Gastrocnemius medialis (tissue), 4 donors: ENCODE measurements at regions of chr18 and their contacts with region 1.

Region 1: GRCh38 chr18:12657684-12658425 is at the start of gene SPIRE1:
- DNase-seq: peak; percentile 67 to 75
- ATAC-seq: peak; percentile 81 to 88
- H3K4me3 ChIP-seq: peak within 1 kb of the TSS; percentile 72 to 96 (median 80)
- H3K27ac ChIP-seq: peak within 1 kb of the TSS; percentile 88 to 99 (median 94)
- H3K4me1 ChIP-seq: peaks cover 1 to 18% of the 10 kb centered on the region in 2 donors
- H3K27me3 ChIP-seq: no peaks in the 10 kb centered on the region
- CTCF ChIP-seq: peak in 1 of 5 experiments; percentile 25
- POLR2A ChIP-seq: peak; percentile 79 to 84
- total RNA-seq, gene SPIRE1: 48.3 to 82.7 (median 55.1) TPM

Region 2: DNA sequence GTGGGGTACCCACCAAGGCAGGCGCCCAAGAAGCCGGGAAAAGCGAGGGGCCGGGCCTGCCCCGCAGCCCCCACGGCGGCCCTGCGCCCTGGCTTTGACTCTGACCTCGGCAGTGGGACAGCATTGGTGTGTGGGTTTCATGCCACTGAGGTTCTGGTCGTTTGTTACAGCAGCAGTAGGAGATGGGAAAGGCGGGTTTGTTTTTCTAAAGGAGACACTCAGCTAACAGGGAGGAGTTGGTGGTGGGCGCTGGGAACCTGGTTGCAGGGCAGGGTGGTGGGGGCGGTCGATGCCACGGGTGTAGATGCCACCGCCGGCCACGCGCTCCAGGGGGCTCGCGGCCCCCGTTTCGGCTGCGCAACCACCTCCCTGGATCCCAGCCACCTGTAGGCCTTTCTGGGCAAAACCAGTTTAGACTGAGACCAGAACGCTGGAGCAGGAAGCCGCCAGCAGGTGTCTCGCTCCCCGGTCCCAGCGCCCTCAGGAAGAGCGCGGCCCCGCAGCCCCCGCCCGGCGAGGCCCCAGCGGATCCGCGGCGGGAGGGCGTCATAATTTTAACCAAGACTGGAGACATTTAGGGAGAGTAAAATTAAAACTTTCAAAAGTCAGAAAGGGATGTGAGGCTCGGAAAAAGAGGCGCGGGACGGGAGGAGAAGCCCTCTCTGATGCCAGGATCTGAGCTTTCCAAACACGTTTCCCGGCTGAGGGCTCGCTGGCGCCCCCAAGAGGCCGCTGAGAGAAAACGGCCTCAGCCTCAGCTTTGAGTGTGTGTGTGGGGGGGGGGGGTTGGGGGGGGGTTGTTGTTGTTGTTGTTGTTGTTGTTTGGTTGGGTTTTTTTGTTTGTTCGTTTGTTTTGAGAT is 386.2 kb before region 1 on chr18:
- in situ Hi-C with region 1: no loop called
- intact Hi-C with region 1: loop called (anchors 5 kb)
- DNase-seq: peak in 1 of 2 donors; percentile 39
- ATAC-seq: peak; percentile 89 to 96
- H3K4me3 ChIP-seq: peak overlapping the region; percentile 48 to 86 (median 54)
- H3K27ac ChIP-seq: peak overlapping the region; percentile 34 to 75 (median 64)
- H3K4me1 ChIP-seq: no peaks in the 10 kb centered on the region
- H3K27me3 ChIP-seq: no peaks in the 10 kb centered on the region
- CTCF ChIP-seq: peak; percentile 29 to 70 (median 60)
- POLR2A ChIP-seq: no peak

Region 3: GRCh38 chr18:12391618-12392165 is 266.2 kb before region 1 on chr18:
- in situ Hi-C with region 1: loop called (anchors 5 to 10 kb)
- intact Hi-C with region 1: loop called (anchors 1 kb)
- DNase-seq: peak; percentile 33 to 34
- ATAC-seq: peak; percentile 90 to 91
- H3K4me3 ChIP-seq: no peak overlapping the region
- H3K27ac ChIP-seq: no peak overlapping the region
- H3K4me1 ChIP-seq: no peaks in the 10 kb centered on the region
- H3K27me3 ChIP-seq: no peaks in the 10 kb centered on the region
- CTCF ChIP-seq: peak; percentile 72 to 91 (median 86)
- POLR2A ChIP-seq: no peak

Region 4: DNA sequence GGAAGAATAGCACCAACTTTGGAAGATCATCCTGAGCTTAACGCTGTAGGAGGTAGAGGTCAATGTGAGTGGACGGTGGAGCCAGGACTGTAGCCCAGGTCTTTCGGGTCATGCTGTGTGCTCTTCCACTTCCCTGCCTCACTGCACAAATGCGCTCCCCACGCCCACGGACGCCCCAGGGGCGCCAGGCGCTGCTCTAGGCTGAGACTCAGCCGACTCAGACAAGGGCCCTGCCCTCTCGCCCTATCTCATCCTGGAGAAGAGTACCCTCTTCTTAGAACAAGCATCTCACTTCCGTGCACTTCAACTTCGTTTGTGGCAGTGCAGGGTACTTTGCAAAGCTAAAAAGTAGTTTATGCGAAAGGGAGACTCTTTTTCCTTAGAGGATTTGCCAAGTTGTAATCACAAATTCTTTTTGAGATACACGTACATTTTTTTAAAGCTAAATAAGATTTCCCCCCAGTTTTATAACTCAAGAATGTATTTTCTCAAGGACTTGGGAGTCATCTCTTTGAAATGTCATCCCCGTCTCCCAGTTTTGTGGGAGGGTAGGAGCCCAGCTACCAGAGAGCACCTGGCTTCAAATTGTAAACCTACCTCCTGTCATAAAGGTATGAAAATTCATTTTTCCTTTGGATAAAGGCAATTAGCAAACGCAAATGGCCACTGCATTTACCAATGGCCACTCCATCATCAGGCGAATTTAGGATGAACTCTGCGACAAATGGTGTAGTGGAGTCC is 251.3 kb before region 1 on chr18:
- in situ Hi-C with region 1: no loop called
- intact Hi-C with region 1: loop called (anchors 1 kb)
- DNase-seq: no peak
- ATAC-seq: no peak
- H3K4me3 ChIP-seq: no peak overlapping the region
- H3K27ac ChIP-seq: no peak overlapping the region
- H3K4me1 ChIP-seq: peaks cover 0 to 6% of the 10 kb centered on the region in 2 donors
- H3K27me3 ChIP-seq: peaks cover 16 to 36% (median 33%) of the 10 kb centered on the region in 3 donors
- CTCF ChIP-seq: no peak
- POLR2A ChIP-seq: no peak

Region 5: DNA sequence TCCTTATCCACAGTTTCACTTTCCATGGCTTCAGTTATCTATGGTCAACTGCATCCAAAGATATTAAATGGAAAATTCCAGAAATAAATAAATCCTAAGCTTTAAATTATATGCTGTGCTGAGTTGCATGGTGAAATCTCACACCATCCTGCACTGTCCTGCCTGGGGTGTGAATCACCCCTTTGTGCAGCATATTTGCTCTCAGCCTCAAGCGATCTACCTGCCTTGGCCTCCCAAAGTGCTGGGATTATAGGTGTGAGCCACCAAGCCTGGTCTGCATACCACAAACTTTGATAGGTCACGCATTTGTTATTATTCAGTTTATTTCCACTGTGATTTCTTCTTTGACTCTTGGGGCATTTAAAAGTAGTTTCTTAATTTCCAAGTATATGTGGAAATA is 117.1 kb before region 1 on chr18:
- in situ Hi-C with region 1: no loop called
- intact Hi-C with region 1: loop called (anchors 2 kb)
- DNase-seq: no peak
- ATAC-seq: no peak
- H3K4me3 ChIP-seq: no peak overlapping the region
- H3K27ac ChIP-seq: no peak overlapping the region
- H3K4me1 ChIP-seq: no peaks in the 10 kb centered on the region
- H3K27me3 ChIP-seq: no peaks in the 10 kb centered on the region
- CTCF ChIP-seq: no peak
- POLR2A ChIP-seq: no peak

Region 6: DNA sequence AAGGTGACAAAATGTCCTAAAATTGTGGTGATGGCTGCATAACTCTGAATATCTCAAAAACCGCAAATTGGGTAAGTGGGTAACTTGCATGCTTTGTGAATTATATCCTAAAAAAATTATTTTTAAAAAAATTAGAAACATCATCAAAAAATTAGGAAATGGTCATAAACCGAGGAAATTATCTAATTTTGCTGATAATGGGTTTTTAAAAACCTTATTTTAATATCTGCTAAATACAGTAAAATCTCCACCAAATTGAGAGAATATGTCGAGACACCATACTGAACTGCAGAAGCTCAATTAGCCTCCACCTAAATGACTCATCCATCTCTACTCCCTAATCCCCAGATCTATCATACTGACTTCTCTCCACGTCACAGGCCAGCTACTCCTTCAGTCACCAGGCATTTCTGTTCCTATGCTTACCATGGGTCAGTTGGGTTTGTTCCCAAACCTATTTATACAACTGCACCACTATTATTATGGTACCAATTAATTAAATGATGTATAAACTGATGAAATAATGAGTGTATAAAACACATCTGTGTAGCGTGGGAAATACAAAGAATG is 36.0 kb before region 1 on chr18:
- in situ Hi-C with region 1: no loop called
- intact Hi-C with region 1: no loop called
- DNase-seq: no peak
- ATAC-seq: no peak
- H3K4me3 ChIP-seq: no peak overlapping the region
- H3K27ac ChIP-seq: no peak overlapping the region
- H3K4me1 ChIP-seq: no peaks in the 10 kb centered on the region
- H3K27me3 ChIP-seq: no peaks in the 10 kb centered on the region
- CTCF ChIP-seq: no peak
- POLR2A ChIP-seq: no peak

Region 7: GRCh38 chr18:12883684-12884405 is 226.0 kb after region 1 on chr18 and contains the start of gene PTPN2:
- in situ Hi-C with region 1: no loop called
- intact Hi-C with region 1: loop called (anchors 5 kb)
- DNase-seq: peak; percentile 88 to 92
- ATAC-seq: peak; percentile 91 to 95
- H3K4me3 ChIP-seq: peak within 1 kb of the TSS; percentile 72 to 90 (median 82)
- H3K27ac ChIP-seq: peak within 1 kb of the TSS; percentile 92 to 98 (median 96)
- H3K4me1 ChIP-seq: peaks cover 16 to 20% of the 10 kb centered on the region in 2 donors
- H3K27me3 ChIP-seq: no peaks in the 10 kb centered on the region
- CTCF ChIP-seq: no peak
- POLR2A ChIP-seq: peak; percentile 93 to 94
- total RNA-seq, gene PTPN2: 17.0 to 20.0 (median 17.5) TPM

Region 8: DNA sequence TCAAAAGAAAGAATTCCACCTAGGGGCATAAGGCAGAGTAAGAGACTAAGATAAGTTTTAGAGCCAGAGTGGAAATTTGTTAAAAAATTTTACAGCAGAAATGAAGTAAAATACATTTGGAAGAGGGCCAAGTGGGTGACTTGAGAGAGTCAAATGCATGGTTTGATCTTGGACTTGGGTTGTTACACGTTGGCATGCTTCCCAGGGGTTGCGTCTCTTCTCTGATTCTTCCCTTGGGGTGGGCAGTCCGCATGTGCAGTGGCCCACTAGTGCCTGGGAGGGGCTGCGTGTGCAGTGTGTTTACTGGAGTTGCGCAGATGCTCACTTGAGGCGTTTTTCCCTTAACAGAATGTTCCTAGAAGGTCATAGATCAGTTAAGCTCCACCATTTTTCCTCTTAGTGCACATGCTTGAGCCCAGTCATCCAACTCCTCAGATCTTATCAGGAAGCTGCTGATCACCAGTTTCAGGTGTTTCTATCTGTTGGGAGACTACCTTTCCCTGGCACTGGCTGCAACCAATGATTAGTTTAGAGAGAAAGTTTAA is 303.1 kb after region 1 on chr18:
- in situ Hi-C with region 1: no loop called
- intact Hi-C with region 1: no loop called
- DNase-seq: no peak
- ATAC-seq: no peak
- H3K4me3 ChIP-seq: no peak overlapping the region
- H3K27ac ChIP-seq: no peak overlapping the region
- H3K4me1 ChIP-seq: no peaks in the 10 kb centered on the region
- H3K27me3 ChIP-seq: no peaks in the 10 kb centered on the region
- CTCF ChIP-seq: no peak
- POLR2A ChIP-seq: no peak

Region 9: GRCh38 chr18:13653746-13654433 is 996.0 kb after region 1 on chr18:
- in situ Hi-C with region 1: no loop called
- intact Hi-C with region 1: no loop called
- DNase-seq: no peak
- ATAC-seq: no peak
- H3K4me3 ChIP-seq: no peak overlapping the region
- H3K27ac ChIP-seq: no peak overlapping the region
- H3K4me1 ChIP-seq: no peaks in the 10 kb centered on the region
- H3K27me3 ChIP-seq: no peaks in the 10 kb centered on the region
- CTCF ChIP-seq: no peak
- POLR2A ChIP-seq: no peak